ENCODE measurements at regions of chr16 and their contacts with region 1.

Region 1: GRCh38 chr16:84617791-84618580 is at the start of gene COTL1:
- DNase-seq: peak; percentile 99
- H3K4me3 ChIP-seq: peak within 1 kb of the TSS; percentile 96
- H3K4me3 Mint-ChIP-seq: peak within 1 kb of the TSS; percentile 96
- H3K27ac Mint-ChIP-seq: peak within 1 kb of the TSS; percentile 100
- H3K4me1 ChIP-seq: peaks cover 31% of the 10 kb centered on the region
- H3K4me1 Mint-ChIP-seq: peaks cover 59% of the 10 kb centered on the region
- H3K27me3 ChIP-seq: no peaks in the 10 kb centered on the region
- H3K27me3 Mint-ChIP-seq: no peaks in the 10 kb centered on the region
- CTCF ChIP-seq: no peak
- total RNA-seq, gene COTL1: 434 and 461 TPM in 2 replicates

Region 2: GRCh38 chr16:84532291-84532724 is 85.7 kb before region 1 on chr16:
- CTCF ChIA-PET with region 1: interaction called, 3 read pairs
- POLR2A ChIA-PET with region 1: interaction called, 3 read pairs
- intact Hi-C with region 1: loop called (anchors 1 kb)
- DNase-seq: peak; percentile 73 to 87
- H3K4me3 ChIP-seq: no peak overlapping the region
- H3K4me3 Mint-ChIP-seq: peak overlapping the region; percentile 64
- H3K27ac Mint-ChIP-seq: peak overlapping the region; percentile 96
- H3K4me1 ChIP-seq: peaks cover 61% of the 10 kb centered on the region
- H3K4me1 Mint-ChIP-seq: peaks cover 40% of the 10 kb centered on the region
- H3K27me3 ChIP-seq: no peaks in the 10 kb centered on the region
- H3K27me3 Mint-ChIP-seq: no peaks in the 10 kb centered on the region
- CTCF ChIP-seq: no peak

Region 3: GRCh38 chr16:84569382-84569987 is 48.5 kb before region 1 on chr16:
- CTCF ChIA-PET with region 1: interaction called, 12 read pairs
- POLR2A ChIA-PET with region 1: interaction called, 9 read pairs
- intact Hi-C with region 1: loop called (anchors 1 kb)
- DNase-seq: peak; percentile 74 to 78
- H3K4me3 ChIP-seq: no peak overlapping the region
- H3K4me3 Mint-ChIP-seq: peak overlapping the region; percentile 62
- H3K27ac Mint-ChIP-seq: peak overlapping the region; percentile 95
- H3K4me1 ChIP-seq: peaks cover 50% of the 10 kb centered on the region
- H3K4me1 Mint-ChIP-seq: peaks cover 58% of the 10 kb centered on the region
- H3K27me3 ChIP-seq: no peaks in the 10 kb centered on the region
- H3K27me3 Mint-ChIP-seq: no peaks in the 10 kb centered on the region
- CTCF ChIP-seq: no peak

Region 4: GRCh38 chr16:84726079-84726668 is 108.2 kb after region 1 on chr16:
- CTCF ChIA-PET with region 1: interaction called, 26 read pairs
- POLR2A ChIA-PET with region 1: no interaction called
- intact Hi-C with region 1: loop called (anchors 1 kb)
- DNase-seq: peak; percentile 94 to 95
- H3K4me3 ChIP-seq: peak overlapping the region; percentile 21
- H3K4me3 Mint-ChIP-seq: peak overlapping the region; percentile 68
- H3K27ac Mint-ChIP-seq: peak overlapping the region; percentile 61
- H3K4me1 ChIP-seq: peaks cover 56% of the 10 kb centered on the region
- H3K4me1 Mint-ChIP-seq: peaks cover 62% of the 10 kb centered on the region
- H3K27me3 ChIP-seq: no peaks in the 10 kb centered on the region
- H3K27me3 Mint-ChIP-seq: no peaks in the 10 kb centered on the region
- CTCF ChIP-seq: peak; percentile 98 to 99

Region 5: DNA sequence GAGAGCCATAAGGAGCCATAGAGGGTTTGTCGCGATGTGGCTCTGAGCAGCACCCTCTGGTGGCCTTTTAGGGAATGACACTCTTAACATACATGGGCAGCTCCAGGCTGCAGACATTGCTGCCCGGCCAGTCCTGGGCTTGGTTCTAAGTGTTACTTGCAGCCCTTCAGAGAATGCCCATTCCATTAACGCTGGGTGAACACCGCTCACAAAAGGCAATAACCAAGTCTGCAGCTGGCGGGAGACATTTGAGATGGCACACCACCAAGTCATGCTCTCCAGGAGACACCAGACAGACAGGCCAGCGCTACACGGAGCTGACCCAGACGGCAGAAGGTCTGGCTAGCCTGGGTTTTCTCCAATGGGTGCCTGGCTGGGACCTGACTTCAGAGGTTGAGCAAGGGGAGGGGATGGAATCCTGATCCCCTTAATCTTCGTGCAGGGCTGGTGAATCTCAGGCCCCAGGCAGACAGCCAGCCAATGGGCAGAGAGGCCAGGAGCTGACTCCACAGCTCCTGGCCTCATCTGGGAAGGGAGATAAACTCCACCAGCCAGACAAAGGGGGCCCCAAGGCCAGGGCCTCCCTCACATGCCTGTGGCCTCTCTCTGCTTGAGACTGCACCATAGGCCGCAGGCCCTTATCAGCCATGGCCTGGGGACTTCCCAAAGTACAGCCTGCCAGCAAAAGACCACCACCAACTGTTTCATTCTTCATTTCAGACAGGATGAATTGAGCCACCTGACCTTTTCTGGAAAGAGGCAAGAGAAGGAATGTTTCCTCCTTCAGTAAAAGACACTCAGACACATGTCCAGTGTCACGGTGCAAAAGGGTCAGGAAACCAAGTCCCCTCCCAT is 334.6 kb after region 1 on chr16:
- CTCF ChIA-PET with region 1: interaction called, 3 read pairs
- POLR2A ChIA-PET with region 1: no interaction called
- intact Hi-C with region 1: loop called (anchors 2 kb)
- DNase-seq: peak; percentile 83 to 89
- H3K4me3 ChIP-seq: no peak overlapping the region
- H3K4me3 Mint-ChIP-seq: no peak overlapping the region
- H3K27ac Mint-ChIP-seq: no peak overlapping the region
- H3K4me1 ChIP-seq: peaks cover 37% of the 10 kb centered on the region
- H3K4me1 Mint-ChIP-seq: no peaks in the 10 kb centered on the region
- H3K27me3 ChIP-seq: no peaks in the 10 kb centered on the region
- H3K27me3 Mint-ChIP-seq: no peaks in the 10 kb centered on the region
- CTCF ChIP-seq: peak; percentile 95

Measured in Caco-2 (cell line).